CD4-positive, alpha-beta memory T cell (primary cell): ENCODE measurements at regions of chr4 and their contacts with region 1.

Region 1: DNA sequence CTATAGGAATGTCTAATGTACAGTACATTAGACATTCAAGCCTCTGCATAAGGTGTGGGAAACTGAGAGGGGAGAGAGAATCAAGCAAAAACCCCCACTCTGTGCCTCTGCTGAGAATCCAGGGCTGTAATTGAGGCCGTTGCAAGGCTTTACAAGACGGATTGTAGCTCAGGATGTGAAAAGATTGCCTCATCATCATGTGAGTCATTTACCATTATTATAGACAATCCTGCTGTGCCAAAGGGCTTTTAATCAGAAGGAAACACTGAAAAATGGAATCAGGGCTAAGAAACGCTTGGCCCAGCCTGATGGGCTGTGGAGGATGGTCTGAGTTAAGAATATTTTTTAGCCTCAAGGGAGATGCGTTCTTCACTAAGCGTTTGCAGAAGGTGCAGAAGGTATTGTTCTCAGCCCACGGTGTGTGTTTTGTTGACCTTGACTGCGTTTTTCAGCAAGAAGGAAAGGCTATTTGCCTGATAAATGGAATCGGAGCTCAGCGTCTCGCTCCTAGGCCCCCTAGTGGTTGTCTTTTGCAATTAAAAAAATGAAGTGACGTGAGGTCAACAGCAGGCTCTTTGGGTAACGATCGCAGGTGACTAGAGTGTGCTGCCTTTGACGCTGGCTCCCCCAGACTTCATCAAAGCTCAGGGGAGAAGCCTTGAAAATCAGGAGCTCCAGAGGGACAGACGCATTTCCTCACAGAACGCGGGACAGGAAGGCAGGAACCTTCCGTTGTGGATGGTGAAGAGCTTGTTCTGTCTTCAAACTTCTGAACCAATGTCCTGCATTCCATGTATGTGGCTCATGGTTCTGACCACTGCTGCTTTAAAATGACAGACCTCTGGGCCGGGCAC is 18.1 kb upstream of the CHRNA9 start:
- DNase-seq: peak; percentile 75 to 81 (median 78)
- H3K4me3 ChIP-seq: peak overlapping the region; percentile 7 to 55
- H3K4me3 Mint-ChIP-seq: peak overlapping the region; percentile 74 to 90 (median 84)
- H3K27ac ChIP-seq: peak overlapping the region; percentile 82
- H3K27ac Mint-ChIP-seq: peak overlapping the region; percentile 92 to 97 (median 95)
- H3K4me1 ChIP-seq: peaks cover 31% of the 10 kb centered on the region
- H3K4me1 Mint-ChIP-seq: peaks cover 15 to 37% (median 27%) of the 10 kb centered on the region in 4 donors
- H3K27me3 ChIP-seq: no peaks in the 10 kb centered on the region
- H3K27me3 Mint-ChIP-seq: no peaks in the 10 kb centered on the region

Region 2: GRCh38 chr4:39458505-39459300 is 858.3 kb before region 1 on chr4 and contains the starts of genes LIAS and RPL9:
- CTCF ChIA-PET with region 1: no interaction called
- POLR2A ChIA-PET with region 1: no interaction called
- intact Hi-C with region 1: no loop called
- DNase-seq: peak; percentile 92 to 96 (median 94)
- H3K4me3 ChIP-seq: peak within 1 kb of the TSS; percentile 96 to 97
- H3K4me3 Mint-ChIP-seq: peak within 1 kb of the TSS; percentile 96 to 99 (median 98)
- H3K27ac ChIP-seq: peak within 1 kb of the TSS; percentile 99
- H3K27ac Mint-ChIP-seq: peak within 1 kb of the TSS; percentile 99 to 100 (median 100)
- H3K4me1 ChIP-seq: peaks cover 33% of the 10 kb centered on the region
- H3K4me1 Mint-ChIP-seq: peaks cover 22 to 55% (median 33%) of the 10 kb centered on the region in 4 donors
- H3K27me3 ChIP-seq: no peaks in the 10 kb centered on the region
- H3K27me3 Mint-ChIP-seq: no peaks in the 10 kb centered on the region
- total RNA-seq, gene LIAS: 21.7 to 24.7 TPM
- total RNA-seq, gene RPL9: 2,318 to 2,449 TPM

Region 3: GRCh38 chr4:40143926-40144508 is 173.0 kb before region 1 on chr4:
- CTCF ChIA-PET with region 1: interaction called, 11 read pairs
- POLR2A ChIA-PET with region 1: interaction called, 3 read pairs
- intact Hi-C with region 1: no loop called
- DNase-seq: no peak
- H3K4me3 ChIP-seq: no peak overlapping the region
- H3K4me3 Mint-ChIP-seq: no peak overlapping the region
- H3K27ac ChIP-seq: no peak overlapping the region
- H3K27ac Mint-ChIP-seq: peak overlapping the region in 3 of 7 donors; percentile 46 to 67 (median 61)
- H3K4me1 ChIP-seq: no peaks in the 10 kb centered on the region
- H3K4me1 Mint-ChIP-seq: peaks cover 0 to 4% (median 1%) of the 10 kb centered on the region in 4 donors
- H3K27me3 ChIP-seq: no peaks in the 10 kb centered on the region
- H3K27me3 Mint-ChIP-seq: no peaks in the 10 kb centered on the region

Region 4: GRCh38 chr4:40157436-40157835 is 159.6 kb before region 1 on chr4:
- CTCF ChIA-PET with region 1: interaction called, 153 read pairs
- POLR2A ChIA-PET with region 1: interaction called, 17 read pairs
- intact Hi-C with region 1: no loop called
- DNase-seq: no peak
- H3K4me3 ChIP-seq: no peak overlapping the region
- H3K4me3 Mint-ChIP-seq: no peak overlapping the region
- H3K27ac ChIP-seq: no peak overlapping the region
- H3K27ac Mint-ChIP-seq: no peak overlapping the region
- H3K4me1 ChIP-seq: peaks cover 16% of the 10 kb centered on the region
- H3K4me1 Mint-ChIP-seq: peaks cover 9 to 12% (median 11%) of the 10 kb centered on the region in 4 donors
- H3K27me3 ChIP-seq: no peaks in the 10 kb centered on the region
- H3K27me3 Mint-ChIP-seq: no peaks in the 10 kb centered on the region

Region 5: DNA sequence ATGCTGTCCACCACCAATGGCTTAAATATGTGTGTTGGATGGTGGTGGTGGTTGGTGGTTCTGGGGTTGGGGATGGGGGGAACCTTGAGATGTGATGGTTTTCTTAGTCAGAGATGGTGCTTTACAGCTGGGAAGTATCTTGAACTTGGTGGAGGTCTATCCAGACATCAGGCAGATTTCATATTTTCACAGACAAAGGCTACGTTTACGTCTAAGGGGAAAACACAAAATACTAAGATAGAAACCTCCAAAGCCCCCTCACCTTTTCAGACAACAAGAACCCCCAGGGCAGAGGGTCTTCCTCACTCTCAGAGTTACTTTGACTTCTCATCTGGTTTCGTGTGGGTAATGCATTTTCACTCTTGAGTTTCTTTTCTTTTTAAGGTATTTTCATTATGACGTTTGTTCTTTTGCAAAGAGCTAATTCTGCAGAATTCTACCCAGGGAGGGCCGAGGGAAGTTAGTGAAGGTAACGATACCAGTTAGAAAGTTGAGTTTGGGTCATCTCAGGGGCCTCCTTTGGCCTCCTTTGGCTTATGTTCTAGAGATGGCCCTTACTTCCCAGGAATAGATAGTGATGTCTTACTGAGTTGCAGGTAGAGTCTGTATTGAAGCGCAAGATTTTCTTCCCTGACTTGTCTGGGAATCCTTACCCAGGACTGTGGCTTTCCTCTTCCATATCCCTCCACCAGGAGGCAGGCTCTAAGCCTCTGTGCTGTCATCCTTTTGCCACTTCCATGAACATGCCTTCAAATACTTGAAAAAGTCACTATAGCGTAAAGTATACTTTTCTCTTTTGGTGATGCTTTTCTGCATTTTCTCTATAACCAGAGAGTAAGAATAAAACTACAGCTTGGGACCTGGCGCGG is 88.3 kb before region 1 on chr4:
- CTCF ChIA-PET with region 1: interaction called, 200 read pairs
- POLR2A ChIA-PET with region 1: interaction called, 79 read pairs
- intact Hi-C with region 1: no loop called
- DNase-seq: no peak
- H3K4me3 ChIP-seq: peak overlapping the region in 1 of 2 donors; percentile 33
- H3K4me3 Mint-ChIP-seq: peak overlapping the region; percentile 69 to 93 (median 77)
- H3K27ac ChIP-seq: peak overlapping the region; percentile 72
- H3K27ac Mint-ChIP-seq: peak overlapping the region; percentile 92 to 100 (median 93)
- H3K4me1 ChIP-seq: peaks cover 100% of the 10 kb centered on the region
- H3K4me1 Mint-ChIP-seq: peaks cover 68 to 98% (median 84%) of the 10 kb centered on the region in 4 donors
- H3K27me3 ChIP-seq: no peaks in the 10 kb centered on the region
- H3K27me3 Mint-ChIP-seq: no peaks in the 10 kb centered on the region

Region 6: DNA sequence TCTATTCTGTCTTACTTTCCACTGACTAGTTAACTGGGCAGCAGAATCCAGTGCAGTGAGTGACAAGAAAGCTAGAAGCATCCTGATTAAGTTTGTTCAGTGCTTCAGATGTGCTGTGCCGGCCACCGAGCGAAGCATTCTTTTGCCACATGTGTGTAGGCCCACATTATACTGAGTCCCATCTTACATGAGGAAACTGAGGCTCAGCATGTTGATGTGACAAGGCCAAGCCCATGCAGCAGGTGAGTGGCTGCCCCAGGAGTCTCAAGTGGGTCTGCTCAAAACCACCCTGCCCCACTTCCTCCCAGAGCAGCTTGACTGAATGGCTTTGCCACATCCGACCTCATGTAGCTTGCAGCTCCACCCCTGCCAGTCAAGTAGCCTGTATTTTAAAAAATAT is 69.7 kb before region 1 on chr4:
- CTCF ChIA-PET with region 1: interaction called, 10 read pairs
- POLR2A ChIA-PET with region 1: interaction called, 48 read pairs
- intact Hi-C with region 1: no loop called
- DNase-seq: peak; percentile 66 to 82 (median 69)
- H3K4me3 ChIP-seq: no peak overlapping the region
- H3K4me3 Mint-ChIP-seq: peak overlapping the region in 7 of 8 donors; percentile 19 to 75 (median 58)
- H3K27ac ChIP-seq: peak overlapping the region; percentile 68
- H3K27ac Mint-ChIP-seq: peak overlapping the region; percentile 80 to 100 (median 96)
- H3K4me1 ChIP-seq: peaks cover 88% of the 10 kb centered on the region
- H3K4me1 Mint-ChIP-seq: peaks cover 65 to 92% (median 74%) of the 10 kb centered on the region in 4 donors
- H3K27me3 ChIP-seq: no peaks in the 10 kb centered on the region
- H3K27me3 Mint-ChIP-seq: no peaks in the 10 kb centered on the region

Region 7: DNA sequence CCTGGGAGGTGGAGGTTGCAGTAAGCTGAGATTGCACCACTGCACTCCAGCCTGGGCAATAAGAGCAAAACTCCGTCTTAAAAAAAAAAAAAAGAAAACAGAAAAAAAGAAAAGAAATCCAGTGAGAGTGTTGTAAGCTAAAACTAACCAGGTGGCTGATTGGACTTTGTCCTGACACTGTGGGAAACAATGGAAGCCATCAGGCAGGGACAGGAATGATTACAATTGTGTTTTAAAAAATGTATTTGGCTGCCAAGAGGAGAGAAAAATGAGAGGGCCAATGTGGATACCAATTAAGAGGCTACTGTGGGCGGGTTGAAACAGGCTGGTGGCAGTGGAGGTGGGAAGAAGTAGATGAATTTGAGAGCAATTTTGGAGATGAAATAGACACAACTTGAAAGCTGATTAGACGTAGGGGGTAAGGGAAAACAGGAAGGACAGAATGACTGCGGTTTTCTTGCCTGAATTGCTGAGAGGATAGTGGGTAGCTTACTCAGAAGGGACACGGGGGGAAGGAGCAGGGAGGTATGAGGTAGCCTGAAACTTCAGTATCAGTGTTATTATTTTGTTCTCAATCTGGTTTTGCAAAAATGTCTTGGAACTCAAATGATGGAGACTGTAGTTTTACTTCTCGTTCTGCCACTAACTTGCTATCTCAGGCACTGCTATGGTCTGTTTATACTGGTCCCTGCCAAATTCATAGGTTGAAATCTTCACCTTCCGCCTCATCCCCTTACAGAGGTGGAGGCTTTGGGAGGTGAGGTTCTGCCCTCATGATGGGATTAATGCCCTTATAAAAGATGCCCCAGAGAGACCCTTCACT is 27.4 kb before region 1 on chr4:
- CTCF ChIA-PET with region 1: interaction called, 271 read pairs
- POLR2A ChIA-PET with region 1: interaction called, 7 read pairs
- intact Hi-C with region 1: loop called (anchors 1 kb)
- DNase-seq: peak; percentile 36 to 69 (median 43)
- H3K4me3 ChIP-seq: no peak overlapping the region
- H3K4me3 Mint-ChIP-seq: peak overlapping the region; percentile 7 to 81 (median 76)
- H3K27ac ChIP-seq: peak overlapping the region; percentile 27
- H3K27ac Mint-ChIP-seq: peak overlapping the region; percentile 65 to 96 (median 88)
- H3K4me1 ChIP-seq: peaks cover 47% of the 10 kb centered on the region
- H3K4me1 Mint-ChIP-seq: peaks cover 41 to 79% (median 55%) of the 10 kb centered on the region in 4 donors
- H3K27me3 ChIP-seq: no peaks in the 10 kb centered on the region
- H3K27me3 Mint-ChIP-seq: no peaks in the 10 kb centered on the region